H1 (cell line): ENCODE measurements at regions of chr15 and their contacts with region 1.

Region 1: GRCh38 chr15:40054605-40055545 is 15.9 kb upstream of the SRP14 start:
- DNase-seq: no peak
- H3K4me3 ChIP-seq: no peak overlapping the region
- H3K27ac ChIP-seq: no peak overlapping the region
- H3K4me1 ChIP-seq: peaks cover 3 to 13% (median 5%) of the 10 kb centered on the region in 4 experiments
- H3K27me3 ChIP-seq: no peaks in the 10 kb centered on the region
- CTCF ChIP-seq: no peak
- EP300 ChIP-seq: no peak
- POLR2A ChIP-seq: no peak
- RAD21 ChIP-seq: no peak

Region 2: GRCh38 chr15:40081691-40082194 is 26.9 kb after region 1 on chr15:
- CTCF ChIA-PET with region 1: interaction called, 34 read pairs
- POLR2A ChIA-PET with region 1: interaction called, 4 read pairs
- DNase-seq: no peak
- H3K4me3 ChIP-seq: peak overlapping the region in 3 of 4 experiments; percentile 8 to 42 (median 23); a peak in 3 of 8 replicates
- H3K27ac ChIP-seq: no peak overlapping the region
- H3K4me1 ChIP-seq: peaks cover 0 to 11% (median 8%) of the 10 kb centered on the region in 4 experiments; a peak in 6 of 7 replicates
- H3K27me3 ChIP-seq: peaks cover 0 to 12% (median 7%) of the 10 kb centered on the region in 4 experiments; a peak in 4 of 7 replicates
- CTCF ChIP-seq: peak in 1 of 3 experiments; percentile 10; a peak in 1 of 4 replicates
- EP300 ChIP-seq: no peak
- POLR2A ChIP-seq: no peak; a peak in 1 of 3 replicates
- RAD21 ChIP-seq: peak in 1 of 2 experiments; percentile 22; a peak in 1 of 4 replicates

Region 3: GRCh38 chr15:40092256-40092978 is 37.5 kb after region 1 on chr15:
- CTCF ChIA-PET with region 1: interaction called, 406 read pairs
- POLR2A ChIA-PET with region 1: interaction called, 4 read pairs
- DNase-seq: no peak
- H3K4me3 ChIP-seq: peak overlapping the region in 1 of 4 experiments; percentile 26; a peak in 2 of 8 replicates
- H3K27ac ChIP-seq: peak overlapping the region; percentile 36; the same call in 1 of the 2 replicates
- H3K4me1 ChIP-seq: peaks cover 22 to 67% (median 46%) of the 10 kb centered on the region in 4 experiments
- H3K27me3 ChIP-seq: no peaks in the 10 kb centered on the region
- CTCF ChIP-seq: no peak
- EP300 ChIP-seq: no peak
- POLR2A ChIP-seq: no peak
- RAD21 ChIP-seq: no peak

Region 4: GRCh38 chr15:40098489-40099261 is 43.8 kb after region 1 on chr15:
- CTCF ChIA-PET with region 1: interaction called, 406 read pairs
- POLR2A ChIA-PET with region 1: interaction called, 6 read pairs
- DNase-seq: no peak
- H3K4me3 ChIP-seq: no peak overlapping the region
- H3K27ac ChIP-seq: no peak overlapping the region
- H3K4me1 ChIP-seq: peaks cover 18 to 38% (median 29%) of the 10 kb centered on the region in 4 experiments
- H3K27me3 ChIP-seq: no peaks in the 10 kb centered on the region
- CTCF ChIP-seq: no peak
- EP300 ChIP-seq: no peak
- POLR2A ChIP-seq: no peak
- RAD21 ChIP-seq: no peak

Region 5: GRCh38 chr15:40115670-40116093 is 60.8 kb after region 1 on chr15:
- CTCF ChIA-PET with region 1: interaction called, 406 read pairs
- POLR2A ChIA-PET with region 1: interaction called, 4 read pairs
- DNase-seq: no peak
- H3K4me3 ChIP-seq: no peak overlapping the region
- H3K27ac ChIP-seq: no peak overlapping the region
- H3K4me1 ChIP-seq: peaks cover 5 to 19% (median 9%) of the 10 kb centered on the region in 4 experiments
- H3K27me3 ChIP-seq: no peaks in the 10 kb centered on the region
- CTCF ChIP-seq: no peak
- EP300 ChIP-seq: no peak
- POLR2A ChIP-seq: no peak
- RAD21 ChIP-seq: no peak